ENCODE measurements at regions of chr5 and their contacts with region 1.

Region 1: GRCh38 chr5:2746561-2747032 is 4.9 kb downstream of the IRX2 start:
- DNase-seq: peak; percentile 71
- H3K4me3 Mint-ChIP-seq: peak overlapping the region; percentile 82
- H3K27ac Mint-ChIP-seq: peak overlapping the region; percentile 94
- H3K4me1 Mint-ChIP-seq: peaks cover 32% of the 10 kb centered on the region
- H3K27me3 Mint-ChIP-seq: no peaks in the 10 kb centered on the region
- CTCF ChIP-seq: peak; percentile 22

Region 2: DNA sequence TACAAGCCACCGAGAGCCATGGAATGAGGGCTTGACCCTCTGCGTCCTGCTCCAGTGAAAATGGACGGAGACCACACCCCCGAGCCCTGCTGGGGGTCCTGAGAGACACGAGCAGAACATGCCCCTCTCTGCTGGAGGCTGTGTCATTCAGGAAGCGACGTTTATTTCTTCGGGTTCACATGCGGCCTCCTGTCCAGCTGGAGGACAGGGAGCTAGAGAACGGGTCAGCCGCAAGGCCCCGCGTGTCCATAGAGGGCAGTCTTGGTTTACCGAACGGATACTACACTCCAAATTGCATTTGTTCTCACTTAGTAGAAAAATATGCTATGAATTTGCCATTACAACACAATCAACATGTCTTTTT is 983.1 kb before region 1 on chr5:
- CTCF ChIA-PET with region 1: interaction called, 4 read pairs
- POLR2A ChIA-PET with region 1: no interaction called
- intact Hi-C with region 1: loop called (anchors 2 kb)
- DNase-seq: peak; percentile 71
- H3K4me3 Mint-ChIP-seq: no peak overlapping the region
- H3K27ac Mint-ChIP-seq: no peak overlapping the region
- H3K4me1 Mint-ChIP-seq: no peaks in the 10 kb centered on the region
- H3K27me3 Mint-ChIP-seq: no peaks in the 10 kb centered on the region
- CTCF ChIP-seq: peak; percentile 78

Region 3: DNA sequence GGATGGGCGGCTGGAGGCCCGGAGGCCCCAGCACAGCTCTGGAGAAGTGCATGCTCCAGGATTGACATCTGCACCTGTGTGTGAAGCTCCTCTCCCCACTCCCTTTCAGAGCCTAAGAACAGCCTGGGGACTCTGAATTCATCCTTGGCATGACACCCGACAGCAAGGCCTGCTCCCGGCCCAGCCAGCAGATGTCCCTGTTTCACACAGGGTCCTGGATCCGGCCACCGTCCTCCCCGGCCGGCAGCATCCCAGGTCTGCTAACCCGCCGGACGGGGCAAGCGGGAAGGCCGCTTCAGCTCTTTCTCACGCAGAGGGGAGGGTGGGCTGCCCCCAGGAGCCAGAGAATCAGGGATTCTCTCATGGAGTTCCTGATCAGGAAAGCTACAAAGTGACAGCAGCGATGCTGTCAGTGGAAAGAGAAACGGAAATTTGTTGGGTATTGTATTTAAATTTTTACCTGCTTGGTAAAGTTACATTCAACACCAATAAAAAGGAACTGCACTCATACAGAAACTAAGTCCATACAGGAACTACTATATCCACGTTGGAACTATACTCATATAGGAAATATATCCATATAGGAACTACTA is 538.5 kb before region 1 on chr5:
- CTCF ChIA-PET with region 1: no interaction called
- POLR2A ChIA-PET with region 1: no interaction called
- intact Hi-C with region 1: loop called (anchors 1 kb)
- DNase-seq: peak; percentile 43
- H3K4me3 Mint-ChIP-seq: no peak overlapping the region
- H3K27ac Mint-ChIP-seq: no peak overlapping the region
- H3K4me1 Mint-ChIP-seq: no peaks in the 10 kb centered on the region
- H3K27me3 Mint-ChIP-seq: no peaks in the 10 kb centered on the region
- CTCF ChIP-seq: peak; percentile 46

Region 4: DNA sequence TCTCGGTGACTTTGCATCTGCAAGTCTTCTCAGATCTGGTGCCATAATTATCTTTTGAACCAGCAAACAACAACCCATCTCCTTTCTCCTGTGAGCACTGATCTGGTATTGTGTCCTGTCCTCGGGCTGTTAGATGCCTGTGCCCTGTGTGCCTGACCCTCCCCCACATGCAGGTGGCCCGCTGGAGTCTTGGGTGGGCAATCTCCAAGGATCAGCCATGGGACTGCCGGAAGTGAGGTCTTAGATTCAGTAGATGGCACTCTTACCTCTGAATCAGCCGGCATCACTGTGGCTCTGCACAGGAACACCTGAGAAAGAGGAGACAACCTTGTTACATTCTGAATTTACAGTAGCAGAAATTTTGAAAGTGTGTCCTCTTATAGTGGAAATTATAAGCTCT is 167.5 kb before region 1 on chr5:
- CTCF ChIA-PET with region 1: interaction called, 7 read pairs
- POLR2A ChIA-PET with region 1: interaction called, 4 read pairs
- intact Hi-C with region 1: loop called (anchors 1 kb)
- DNase-seq: peak; percentile 46
- H3K4me3 Mint-ChIP-seq: no peak overlapping the region
- H3K27ac Mint-ChIP-seq: no peak overlapping the region
- H3K4me1 Mint-ChIP-seq: peaks cover 26% of the 10 kb centered on the region
- H3K27me3 Mint-ChIP-seq: no peaks in the 10 kb centered on the region
- CTCF ChIP-seq: no peak

Region 5: DNA sequence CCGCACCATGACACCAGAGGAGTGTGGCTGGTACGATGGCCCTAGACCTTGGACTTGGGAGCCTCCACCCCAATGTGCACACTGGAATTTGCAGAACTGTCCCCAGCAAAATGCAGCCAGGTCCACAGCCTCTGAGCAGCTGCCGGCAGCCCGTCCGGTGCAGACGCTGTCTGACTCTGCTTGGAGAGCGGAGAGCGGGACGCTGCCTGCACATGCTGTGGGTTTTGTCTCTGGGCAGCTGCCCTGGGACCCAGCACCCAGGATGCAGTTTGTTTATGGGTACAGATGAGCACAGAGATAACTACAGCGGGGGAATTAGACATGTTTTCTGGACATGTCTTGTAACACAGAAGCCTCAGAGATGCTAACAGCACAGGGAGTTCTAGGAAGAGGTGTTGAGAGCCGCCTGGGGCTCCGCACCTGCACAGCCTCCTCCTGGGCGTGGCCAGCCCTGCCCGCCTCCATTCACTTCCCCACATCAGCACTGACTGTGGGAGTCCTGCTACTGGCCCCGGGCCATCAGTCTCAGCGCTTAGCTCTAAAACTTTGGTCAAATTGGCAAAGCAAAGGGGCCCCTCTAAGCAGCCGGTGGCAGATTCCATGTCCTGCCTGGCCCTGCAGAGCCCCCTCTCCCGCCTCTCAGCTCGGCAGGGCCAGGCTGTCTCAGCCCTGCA is 154.7 kb before region 1 on chr5:
- CTCF ChIA-PET with region 1: no interaction called
- POLR2A ChIA-PET with region 1: no interaction called
- intact Hi-C with region 1: no loop called
- DNase-seq: peak; percentile 24
- H3K4me3 Mint-ChIP-seq: no peak overlapping the region
- H3K27ac Mint-ChIP-seq: no peak overlapping the region
- H3K4me1 Mint-ChIP-seq: peaks cover 11% of the 10 kb centered on the region
- H3K27me3 Mint-ChIP-seq: no peaks in the 10 kb centered on the region
- CTCF ChIP-seq: no peak

Region 6: DNA sequence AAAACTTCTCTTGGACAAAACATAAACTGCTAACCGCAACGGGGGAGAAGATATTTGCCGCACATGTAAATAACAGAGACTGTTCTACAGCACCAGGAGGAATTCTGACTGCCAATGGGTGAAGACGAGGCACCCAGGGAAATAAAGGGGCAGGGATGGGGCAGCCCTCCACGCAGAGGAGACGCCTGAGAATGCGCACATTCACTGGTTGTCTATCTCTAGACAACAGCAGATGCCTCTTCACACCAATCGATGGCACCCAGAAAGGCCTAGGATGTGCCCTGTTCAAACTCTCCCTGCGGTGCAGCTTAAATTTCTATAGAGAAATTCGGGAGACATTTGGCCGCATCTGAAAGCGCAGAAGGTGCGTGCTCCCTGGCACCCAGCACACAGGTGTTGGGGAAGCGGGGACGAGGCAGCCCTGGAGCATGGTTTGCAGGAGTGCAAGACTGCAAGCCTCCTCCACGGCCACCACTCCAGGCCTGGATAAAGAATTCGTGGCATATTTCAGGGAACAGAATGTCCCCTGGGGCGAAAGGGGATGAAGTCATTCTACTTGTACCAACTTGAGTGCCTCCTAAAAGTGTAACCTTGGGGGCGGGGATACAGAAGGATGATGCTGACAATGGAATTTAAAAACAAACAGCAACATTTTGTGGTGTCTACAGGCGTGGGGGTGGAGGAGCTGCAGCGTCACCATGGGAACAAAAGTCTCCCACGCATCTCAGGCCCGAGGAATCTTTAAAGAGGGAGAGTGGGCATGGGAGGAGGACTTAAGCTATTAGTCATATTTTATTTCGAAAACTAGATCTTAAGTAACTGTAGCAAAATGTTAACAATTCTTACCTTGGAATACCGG is 11.2 kb after region 1 on chr5:
- CTCF ChIA-PET with region 1: interaction called, 3 read pairs
- POLR2A ChIA-PET with region 1: interaction called, 29 read pairs
- intact Hi-C with region 1: no loop called
- DNase-seq: peak; percentile 100
- H3K4me3 Mint-ChIP-seq: no peak overlapping the region
- H3K27ac Mint-ChIP-seq: peak overlapping the region; percentile 86
- H3K4me1 Mint-ChIP-seq: peaks cover 37% of the 10 kb centered on the region
- H3K27me3 Mint-ChIP-seq: no peaks in the 10 kb centered on the region
- CTCF ChIP-seq: no peak